Dorsolateral prefrontal cortex (tissue), 120 donors: ENCODE measurements at regions of chr10 and their contacts with region 1.

Region 1: GRCh38 chr10:90167174-90168064 is 466.0 kb downstream of the KIF20B start:
- DNase-seq: no peak
- H3K4me3 ChIP-seq: no peak overlapping the region
- H3K27ac ChIP-seq: no peak overlapping the region
- H3K27me3 ChIP-seq: peaks cover 0 to 4% (median 0%) of the 10 kb centered on the region in 45 donors
- CTCF ChIP-seq: no peak

Region 2: DNA sequence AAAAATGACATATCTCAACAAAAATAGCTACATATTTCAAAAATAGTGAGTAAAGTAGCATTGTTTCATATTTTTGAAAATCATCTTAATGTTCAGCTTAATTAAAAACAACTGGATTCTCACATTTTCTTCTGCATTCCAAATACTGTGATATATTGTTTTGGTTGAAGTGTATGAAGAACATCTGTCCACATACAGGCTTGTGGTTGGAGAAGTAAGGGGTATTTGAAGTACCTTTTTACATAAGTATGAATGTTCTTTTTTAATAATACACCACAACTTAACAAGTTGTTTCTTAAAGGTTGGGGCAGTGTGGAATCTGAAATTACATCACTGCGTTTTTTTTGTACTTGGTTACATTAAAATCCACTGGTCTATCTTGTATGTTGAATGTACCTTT is 23.5 kb before region 1 on chr10:
- intact Hi-C with region 1: loop called in 1 of 2 experiments (anchors 2 kb)
- DNase-seq: no peak
- H3K4me3 ChIP-seq: no peak overlapping the region
- H3K27ac ChIP-seq: no peak overlapping the region
- H3K27me3 ChIP-seq: no peaks in the 10 kb centered on the region
- CTCF ChIP-seq: no peak